ENCODE measurements at regions of chr6 and their contacts with region 1.

Region 1: GRCh38 chr6:133568970-133569889 is 319.7 kb upstream of the TCF21 start:
- H3K4me3 ChIP-seq: peak overlapping the region; percentile 49
- H3K27ac ChIP-seq: no peak overlapping the region; the same call in 1 of the 2 replicates
- H3K4me1 ChIP-seq: no peaks in the 10 kb centered on the region
- CTCF ChIP-seq: peak; percentile 79

Region 2: DNA sequence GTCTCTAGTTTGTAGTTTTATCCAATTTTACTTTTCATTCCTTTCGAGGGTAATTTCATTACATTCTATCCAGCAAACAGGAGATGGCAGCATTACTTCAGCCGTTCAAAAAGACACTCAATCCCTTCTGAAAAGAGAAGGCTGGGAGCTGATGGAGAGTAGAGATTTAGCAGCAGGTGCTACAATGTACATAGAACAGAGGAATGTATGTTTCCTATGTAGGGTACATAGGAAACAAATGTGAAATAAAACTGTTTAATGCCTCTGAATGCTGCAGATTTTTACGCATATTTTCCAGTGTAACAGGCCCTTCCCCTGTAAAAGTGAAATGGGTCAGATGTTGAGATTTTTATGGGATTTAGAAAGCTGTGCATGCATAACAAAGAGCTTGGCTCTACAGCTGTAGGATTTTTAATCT is 738.9 kb before region 1 on chr6:
- CTCF ChIA-PET with region 1: interaction called, 15 read pairs
- POLR2A ChIA-PET with region 1: no interaction called
- H3K4me3 ChIP-seq: no peak overlapping the region
- H3K27ac ChIP-seq: no peak overlapping the region
- H3K4me1 ChIP-seq: no peaks in the 10 kb centered on the region
- CTCF ChIP-seq: peak; percentile 46; the same call in 1 of the 2 replicates

Region 3: GRCh38 chr6:133817460-133818047 is 248.3 kb after region 1 on chr6:
- CTCF ChIA-PET with region 1: interaction called, 11 read pairs
- POLR2A ChIA-PET with region 1: no interaction called
- H3K4me3 ChIP-seq: no peak overlapping the region
- H3K27ac ChIP-seq: no peak overlapping the region
- H3K4me1 ChIP-seq: no peaks in the 10 kb centered on the region
- CTCF ChIP-seq: no peak

Region 4: GRCh38 chr6:133854364-133855275 is 285.4 kb after region 1 on chr6:
- CTCF ChIA-PET with region 1: interaction called, 12 read pairs
- POLR2A ChIA-PET with region 1: no interaction called
- H3K4me3 ChIP-seq: peak overlapping the region; percentile 47
- H3K27ac ChIP-seq: no peak overlapping the region
- H3K4me1 ChIP-seq: no peaks in the 10 kb centered on the region
- CTCF ChIP-seq: peak; percentile 96

Region 5: DNA sequence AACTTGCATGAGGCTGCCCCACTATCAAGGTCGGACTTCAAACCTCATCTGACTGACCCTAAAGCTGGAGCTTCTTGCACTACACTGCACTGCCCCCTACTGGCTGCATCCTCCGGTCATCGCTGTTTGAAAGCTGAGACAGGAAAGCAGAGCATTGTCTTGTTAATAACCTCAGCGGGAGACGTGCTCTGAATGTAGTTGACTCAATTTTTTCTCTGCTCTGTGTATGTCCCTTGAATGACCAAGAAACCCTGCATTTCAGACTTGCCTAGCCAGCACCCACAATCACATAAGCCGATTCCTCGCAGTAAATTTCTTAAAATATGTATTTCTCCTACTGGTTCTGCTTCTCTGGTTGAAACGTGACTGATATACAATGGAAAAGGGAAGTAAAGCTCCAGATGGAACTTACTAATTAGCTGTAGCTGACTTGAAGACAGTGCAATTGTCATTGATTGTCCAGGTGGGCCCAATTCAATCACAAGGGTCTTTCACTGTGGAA is 347.5 kb after region 1 on chr6:
- CTCF ChIA-PET with region 1: interaction called, 349 read pairs
- POLR2A ChIA-PET with region 1: no interaction called
- H3K4me3 ChIP-seq: no peak overlapping the region
- H3K27ac ChIP-seq: no peak overlapping the region
- H3K4me1 ChIP-seq: peaks cover 4% of the 10 kb centered on the region
- CTCF ChIP-seq: peak; percentile 88